Heart left ventricle (tissue), 16 donors: ENCODE measurements at regions of chr10 and their contacts with region 1.

Region 1: GRCh38 chr10:24202181-24202570 is 6.8 kb upstream of the KIAA1217 start:
- DNase-seq: no peak
- ATAC-seq: peak in 1 of 4 donors; percentile 19
- H3K4me3 ChIP-seq: no peak overlapping the region
- H3K27ac ChIP-seq: peak overlapping the region in 4 of 12 donors; percentile 2 to 59 (median 36)
- H3K4me1 ChIP-seq: peaks cover 4 to 37% (median 16%) of the 10 kb centered on the region in 12 donors
- H3K27me3 ChIP-seq: no peaks in the 10 kb centered on the region
- CTCF ChIP-seq: no peak
- POLR2A ChIP-seq: no peak

Region 2: DNA sequence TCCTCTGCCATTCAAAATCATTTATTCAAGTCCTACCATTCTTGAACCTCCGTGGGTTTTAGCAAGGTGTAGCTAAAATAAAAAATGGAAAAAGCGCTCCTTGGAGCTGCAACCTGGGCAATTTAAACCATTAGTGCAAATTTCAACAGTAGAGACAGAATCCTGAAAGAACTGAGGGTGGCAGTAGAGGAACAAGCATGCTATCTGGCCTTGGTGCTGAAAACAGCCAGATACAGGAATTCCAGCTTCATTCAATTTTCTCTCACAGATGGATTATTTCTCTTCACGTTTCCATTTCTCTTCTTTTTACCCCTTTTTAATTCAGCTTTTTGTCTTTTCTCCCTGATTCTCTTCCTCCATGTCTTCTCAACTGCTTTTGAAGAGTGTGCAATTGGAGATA is 685.6 kb before region 1 on chr10:
- intact Hi-C with region 1: loop called in 1 of 10 experiments (anchors 10 kb)
- DNase-seq: no peak
- ATAC-seq: no peak
- H3K4me3 ChIP-seq: no peak overlapping the region
- H3K27ac ChIP-seq: no peak overlapping the region
- H3K4me1 ChIP-seq: no peaks in the 10 kb centered on the region
- H3K27me3 ChIP-seq: peaks cover 0 to 3% (median 0%) of the 10 kb centered on the region in 9 donors
- CTCF ChIP-seq: peak in 8 of 12 donors; percentile 20 to 52 (median 41)
- POLR2A ChIP-seq: no peak

Region 3: DNA sequence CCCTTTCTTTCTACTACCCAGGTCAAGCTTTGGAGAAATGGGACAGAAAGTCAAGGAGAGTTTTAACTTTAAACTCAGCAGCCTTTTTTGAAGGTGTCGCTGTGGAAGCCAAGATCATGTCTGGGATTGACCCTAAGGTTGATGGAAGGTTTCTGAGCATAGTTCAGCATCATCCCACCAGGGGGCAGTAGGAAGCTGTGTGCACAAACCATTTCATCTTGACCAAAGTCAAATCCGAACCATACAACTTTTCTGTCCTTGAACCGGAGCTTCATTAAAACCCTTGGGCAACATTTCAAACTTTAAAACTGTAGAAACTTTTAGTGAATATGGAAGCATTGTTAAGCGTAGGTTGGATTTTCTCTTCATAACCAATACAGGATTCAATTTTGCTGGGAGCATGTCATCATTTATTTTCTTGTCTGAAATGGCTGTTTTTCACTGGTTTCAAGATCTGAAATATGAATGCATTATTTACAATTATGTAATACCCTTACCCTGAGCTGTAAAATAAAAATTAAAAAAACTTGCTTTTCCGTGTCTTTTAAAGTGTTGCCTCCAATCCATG is 207.6 kb before region 1 on chr10:
- intact Hi-C with region 1: loop called in 2 of 10 experiments (anchors 2 kb)
- DNase-seq: peak in 4 of 5 donors; percentile 40 to 64 (median 58)
- ATAC-seq: peak in 3 of 4 donors; percentile 73 to 80 (median 77)
- H3K4me3 ChIP-seq: peak overlapping the region in 2 of 12 donors; percentile 12 to 14
- H3K27ac ChIP-seq: no peak overlapping the region
- H3K4me1 ChIP-seq: peaks cover 0 to 8% (median 1%) of the 10 kb centered on the region in 12 donors
- H3K27me3 ChIP-seq: no peaks in the 10 kb centered on the region
- CTCF ChIP-seq: peak; percentile 75 to 95 (median 90)
- POLR2A ChIP-seq: no peak

Region 4: DNA sequence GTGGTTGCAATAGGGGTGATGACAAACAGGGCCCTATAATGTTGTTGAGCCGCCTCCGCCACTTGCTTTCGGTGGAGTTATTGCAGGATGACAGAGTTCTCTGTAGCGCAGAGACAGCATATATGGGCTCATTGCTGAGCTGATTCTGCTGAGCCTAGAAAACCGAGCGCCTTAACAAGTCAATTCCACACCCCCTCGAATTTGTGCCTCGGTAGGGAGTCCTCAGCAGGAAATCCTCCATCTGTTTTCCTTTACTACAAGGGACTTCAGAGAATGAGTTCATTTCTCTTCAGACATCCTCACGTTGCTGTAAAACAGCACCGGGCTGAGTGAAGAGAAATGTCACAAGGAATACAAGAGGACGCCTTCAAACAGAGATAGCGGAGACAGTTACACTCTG is 83.9 kb before region 1 on chr10:
- intact Hi-C with region 1: loop called in 2 of 10 experiments (anchors 5 to 10 kb)
- DNase-seq: peak in 1 of 5 donors; percentile 33
- ATAC-seq: peak; percentile 27 to 74 (median 42)
- H3K4me3 ChIP-seq: peak overlapping the region in 11 of 12 donors; percentile 12 to 49 (median 40)
- H3K27ac ChIP-seq: peak overlapping the region in 11 of 12 donors; percentile 33 to 75 (median 60)
- H3K4me1 ChIP-seq: peaks cover 3 to 26% (median 19%) of the 10 kb centered on the region in 12 donors
- H3K27me3 ChIP-seq: no peaks in the 10 kb centered on the region
- CTCF ChIP-seq: no peak
- POLR2A ChIP-seq: peak in 1 of 2 donors; percentile 20

Region 5: DNA sequence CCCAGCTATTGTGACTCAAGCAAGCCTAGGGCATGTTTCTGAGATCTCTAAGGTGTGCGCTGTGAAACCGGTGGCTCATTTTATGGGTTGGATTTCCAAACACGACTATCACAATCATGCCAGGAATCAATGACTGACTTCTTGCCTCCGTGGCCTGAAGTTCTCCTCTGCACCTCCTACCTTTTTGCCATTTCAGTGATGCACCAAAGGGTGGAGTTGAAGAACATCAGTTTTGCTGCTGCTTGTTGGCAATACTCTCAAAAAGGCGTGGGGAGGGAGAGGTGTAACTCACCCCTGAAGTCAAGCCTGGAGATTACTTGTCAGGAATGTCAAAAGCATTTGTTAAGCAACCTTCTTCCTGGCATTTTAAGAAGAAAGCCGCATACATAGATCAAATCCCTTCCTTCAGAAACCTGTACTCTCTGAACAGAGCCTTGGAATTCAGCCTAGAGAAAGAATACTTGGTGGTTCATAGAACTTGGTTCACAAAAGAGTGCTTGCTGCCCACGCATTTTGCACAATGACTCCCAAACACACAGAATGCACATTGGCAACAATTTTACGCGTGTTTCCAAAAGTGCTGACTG is 47.7 kb after region 1 on chr10:
- intact Hi-C with region 1: no loop called
- DNase-seq: no peak
- ATAC-seq: no peak
- H3K4me3 ChIP-seq: no peak overlapping the region
- H3K27ac ChIP-seq: no peak overlapping the region
- H3K4me1 ChIP-seq: peaks cover 0 to 44% (median 13%) of the 10 kb centered on the region in 12 donors
- H3K27me3 ChIP-seq: no peaks in the 10 kb centered on the region
- CTCF ChIP-seq: no peak
- POLR2A ChIP-seq: no peak

Region 6: DNA sequence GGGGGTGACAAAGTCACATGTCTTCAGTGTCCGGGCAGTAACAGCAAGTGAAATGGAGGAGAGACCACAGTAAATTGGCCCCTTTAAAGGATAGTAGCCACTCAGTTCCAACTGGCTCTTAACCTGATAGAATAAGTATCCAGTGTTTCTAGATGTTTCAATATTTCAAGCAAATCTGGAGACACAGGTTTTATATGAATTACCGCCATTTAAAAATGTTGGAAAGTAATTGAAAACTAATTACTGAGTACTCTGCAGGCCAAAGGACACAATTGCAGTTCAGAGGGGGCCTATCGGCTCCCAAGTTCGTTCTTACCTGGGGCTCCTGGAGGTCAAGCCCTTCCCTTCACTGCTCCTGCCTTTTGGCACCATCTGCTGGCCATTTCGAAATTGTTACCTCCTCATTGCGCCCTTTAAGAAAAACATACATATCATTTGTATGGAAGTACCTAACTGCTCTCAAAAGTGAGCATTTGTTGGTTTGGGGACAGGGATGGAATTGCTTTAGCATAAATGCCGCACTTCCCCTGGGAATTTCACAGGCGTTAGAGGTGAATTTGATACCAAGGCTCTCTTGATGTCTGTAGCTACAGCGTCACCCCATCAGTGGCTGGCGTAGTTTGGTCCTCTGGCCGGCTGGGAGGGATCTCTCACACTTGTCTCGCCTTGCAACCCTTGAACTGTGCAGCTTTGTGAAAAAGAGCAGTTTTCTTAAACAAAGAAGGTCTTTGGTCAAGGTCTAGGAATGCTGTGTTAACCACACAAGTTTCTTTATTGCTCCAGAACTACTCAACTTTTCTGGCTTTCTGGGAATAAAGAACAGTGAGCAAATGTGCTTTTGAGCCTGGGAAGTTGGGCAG is 301.5 kb after region 1 on chr10:
- intact Hi-C with region 1: loop called in 4 of 10 experiments (anchors 5 to 10 kb)
- DNase-seq: peak in 2 of 5 donors; percentile 23 to 46
- ATAC-seq: peak in 2 of 4 donors; percentile 52 to 54
- H3K4me3 ChIP-seq: no peak overlapping the region
- H3K27ac ChIP-seq: peak overlapping the region in 1 of 12 donors; percentile 6
- H3K4me1 ChIP-seq: peaks cover 0 to 4% (median 0%) of the 10 kb centered on the region in 12 donors
- H3K27me3 ChIP-seq: no peaks in the 10 kb centered on the region
- CTCF ChIP-seq: peak; percentile 40 to 70 (median 58)
- POLR2A ChIP-seq: no peak

Region 7: GRCh38 chr10:24518981-24519597 is 316.9 kb after region 1 on chr10:
- intact Hi-C with region 1: loop called in 3 of 10 experiments (anchors 5 kb)
- DNase-seq: peak in 4 of 5 donors; percentile 46 to 69 (median 60)
- ATAC-seq: peak; percentile 40 to 82 (median 66)
- H3K4me3 ChIP-seq: no peak overlapping the region
- H3K27ac ChIP-seq: no peak overlapping the region
- H3K4me1 ChIP-seq: peaks cover 0 to 10% (median 2%) of the 10 kb centered on the region in 12 donors
- H3K27me3 ChIP-seq: no peaks in the 10 kb centered on the region
- CTCF ChIP-seq: peak; percentile 62 to 84 (median 74)
- POLR2A ChIP-seq: no peak